Activated CD8-positive, alpha-beta memory T cell treated with anti-CD3 and anti-CD28 coated beads, Interleukin-2, amount 10 ng/mL, durations not matched to agents 7 days and 5 days (primary cell): ENCODE measurements at regions of chr6 and their contacts with region 1.

Region 1: DNA sequence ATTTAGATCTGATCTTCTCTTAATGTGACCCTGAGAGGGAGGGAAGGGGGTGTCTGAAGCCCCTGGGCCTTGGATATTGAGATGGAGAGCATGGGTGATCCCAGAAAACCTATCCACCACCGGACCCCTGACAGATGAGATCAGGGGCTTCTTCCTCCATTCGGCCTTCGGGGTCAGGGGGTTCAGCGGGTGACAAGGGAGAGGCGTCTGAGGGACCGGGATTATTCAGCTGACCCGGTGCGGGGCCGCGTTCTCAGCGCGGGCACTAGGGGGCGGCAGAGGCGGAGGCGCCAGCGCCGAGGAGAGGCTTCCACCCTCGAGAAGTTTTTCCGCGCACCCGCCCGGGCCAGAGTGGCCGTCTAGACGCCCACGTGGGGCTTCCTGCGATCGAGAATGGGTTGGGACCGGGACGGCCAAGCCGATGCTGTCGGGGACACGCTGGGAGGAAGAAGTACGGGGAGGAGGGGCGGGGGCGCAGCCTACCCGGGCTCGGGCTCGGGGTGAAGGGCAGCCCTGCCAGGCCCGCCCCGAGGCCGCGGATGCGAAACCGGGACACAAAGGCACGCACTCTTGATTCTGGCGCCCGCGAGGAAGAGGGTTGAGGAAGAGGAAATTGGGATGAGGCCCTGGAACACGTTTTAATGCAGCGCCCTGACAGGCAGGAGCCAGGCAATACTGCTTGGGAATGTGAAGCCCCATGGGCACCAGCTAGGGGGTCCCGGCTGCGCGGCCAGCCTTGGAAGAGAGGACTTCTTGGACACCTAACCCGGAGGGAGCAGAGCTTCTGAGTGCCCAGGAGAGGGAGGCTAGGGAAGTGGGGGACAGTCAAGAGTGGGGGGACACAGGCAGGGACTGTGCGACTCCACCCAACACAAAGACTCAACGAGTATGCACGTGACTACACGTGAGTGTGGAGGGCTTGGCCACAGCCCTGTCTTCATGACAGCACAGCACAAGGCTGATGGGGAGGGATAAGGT is 30.6 kb downstream of the COL11A2 start:
- DNase-seq: peak; percentile 86
- ATAC-seq: peak; percentile 98
- H3K4me3 Mint-ChIP-seq: peak overlapping the region; percentile 76
- H3K27ac Mint-ChIP-seq: peak overlapping the region; percentile 74
- H3K4me1 Mint-ChIP-seq: peaks cover 16% of the 10 kb centered on the region
- H3K27me3 Mint-ChIP-seq: peaks cover under 1% of the 10 kb centered on the region

Region 2: DNA sequence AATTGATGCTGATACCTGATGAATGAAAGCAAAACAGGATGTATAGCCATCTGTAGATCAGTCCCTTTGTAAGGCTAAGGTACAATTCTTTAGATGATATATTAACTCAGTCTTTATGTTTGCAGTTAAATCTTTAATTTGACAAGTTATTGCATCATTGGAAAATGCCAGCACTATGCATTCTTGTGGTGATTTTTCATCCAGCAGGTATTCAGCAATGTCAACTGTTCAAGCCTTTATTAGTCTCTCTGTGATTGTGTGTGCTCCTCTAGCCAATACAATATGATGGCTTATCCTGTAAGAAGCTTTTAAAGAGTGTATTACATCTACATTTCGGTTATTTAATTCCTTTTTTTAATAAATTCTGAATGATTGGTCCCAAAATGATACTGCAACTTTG is 255.1 kb before region 1 on chr6:
- CTCF ChIA-PET with region 1: no interaction called
- DNase-seq: no peak
- ATAC-seq: no peak
- H3K4me3 Mint-ChIP-seq: no peak overlapping the region
- H3K27ac Mint-ChIP-seq: no peak overlapping the region
- H3K4me1 Mint-ChIP-seq: no peaks in the 10 kb centered on the region
- H3K27me3 Mint-ChIP-seq: peaks cover 4% of the 10 kb centered on the region

Region 3: GRCh38 chr6:33064723-33065122 is 96.9 kb before region 1 on chr6:
- CTCF ChIA-PET with region 1: no interaction called
- DNase-seq: no peak
- ATAC-seq: no peak
- H3K4me3 Mint-ChIP-seq: no peak overlapping the region
- H3K27ac Mint-ChIP-seq: no peak overlapping the region
- H3K4me1 Mint-ChIP-seq: peaks cover 10% of the 10 kb centered on the region
- H3K27me3 Mint-ChIP-seq: no peaks in the 10 kb centered on the region

Region 4: GRCh38 chr6:33172688-33173534 is 11.3 kb after region 1 on chr6:
- CTCF ChIA-PET with region 1: interaction called, 11 read pairs
- DNase-seq: no peak
- ATAC-seq: no peak
- H3K4me3 Mint-ChIP-seq: no peak overlapping the region
- H3K27ac Mint-ChIP-seq: no peak overlapping the region
- H3K4me1 Mint-ChIP-seq: no peaks in the 10 kb centered on the region
- H3K27me3 Mint-ChIP-seq: no peaks in the 10 kb centered on the region

Region 5: GRCh38 chr6:33200219-33201146 is 38.8 kb after region 1 on chr6 and contains the starts of genes RXRB and SLC39A7:
- CTCF ChIA-PET with region 1: interaction called, 35 read pairs
- DNase-seq: peak; percentile 100
- ATAC-seq: peak; percentile 70
- H3K4me3 Mint-ChIP-seq: peak within 1 kb of the TSS; percentile 99
- H3K27ac Mint-ChIP-seq: peak within 1 kb of the TSS; percentile 97
- H3K4me1 Mint-ChIP-seq: peaks cover 66% of the 10 kb centered on the region
- H3K27me3 Mint-ChIP-seq: no peaks in the 10 kb centered on the region
- total RNA-seq, gene RXRB: 36.0 to 38.9 TPM
- total RNA-seq, gene SLC39A7: 50.1 to 63.9 TPM